Activated B cell treated with CpG ODN at 0.5 μM for 24 hours (primary cell): ENCODE measurements at regions of chr1 and their contacts with region 1.

Region 1: GRCh38 chr1:65419681-65420589 is 533 bp upstream of the LEPR start:
- DNase-seq: peak; percentile 94
- ATAC-seq: peak; percentile 92
- H3K4me3 Mint-ChIP-seq: no peak overlapping the region
- H3K27ac Mint-ChIP-seq: peak overlapping the region; percentile 91
- H3K4me1 Mint-ChIP-seq: peaks cover 11% of the 10 kb centered on the region
- H3K27me3 Mint-ChIP-seq: peaks cover 9% of the 10 kb centered on the region
- CTCF ChIP-seq: no peak

Region 2: GRCh38 chr1:63522891-63523728 is 1896.8 kb before region 1 on chr1 and contains the starts of genes EFCAB7 and ITGB3BP:
- CTCF ChIA-PET with region 1: no interaction called
- POLR2A ChIA-PET with region 1: no interaction called
- intact Hi-C with region 1: loop called (anchors 2 kb)
- DNase-seq: peak; percentile 78
- ATAC-seq: peak; percentile 87
- H3K4me3 Mint-ChIP-seq: peak within 1 kb of the TSS; percentile 97
- H3K27ac Mint-ChIP-seq: peak within 1 kb of the TSS; percentile 98
- H3K4me1 Mint-ChIP-seq: peaks cover 22% of the 10 kb centered on the region
- H3K27me3 Mint-ChIP-seq: no peaks in the 10 kb centered on the region
- CTCF ChIP-seq: no peak
- total RNA-seq, gene EFCAB7: 7.5 and 8.6 TPM in 2 replicates
- total RNA-seq, gene ITGB3BP: 24.9 and 27.0 TPM in 2 replicates

Region 3: GRCh38 chr1:64744492-64745180 is 675.3 kb before region 1 on chr1 and contains the start of gene RAVER2:
- CTCF ChIA-PET with region 1: no interaction called
- POLR2A ChIA-PET with region 1: no interaction called
- intact Hi-C with region 1: loop called (anchors 10 kb)
- DNase-seq: peak; percentile 50
- ATAC-seq: peak; percentile 79
- H3K4me3 Mint-ChIP-seq: peak within 1 kb of the TSS; percentile 85
- H3K27ac Mint-ChIP-seq: peak within 1 kb of the TSS; percentile 18
- H3K4me1 Mint-ChIP-seq: peaks cover 20% of the 10 kb centered on the region
- H3K27me3 Mint-ChIP-seq: peaks cover 8% of the 10 kb centered on the region
- CTCF ChIP-seq: no peak
- total RNA-seq, gene RAVER2: 1.0 and 1.2 TPM in 2 replicates

Region 4: DNA sequence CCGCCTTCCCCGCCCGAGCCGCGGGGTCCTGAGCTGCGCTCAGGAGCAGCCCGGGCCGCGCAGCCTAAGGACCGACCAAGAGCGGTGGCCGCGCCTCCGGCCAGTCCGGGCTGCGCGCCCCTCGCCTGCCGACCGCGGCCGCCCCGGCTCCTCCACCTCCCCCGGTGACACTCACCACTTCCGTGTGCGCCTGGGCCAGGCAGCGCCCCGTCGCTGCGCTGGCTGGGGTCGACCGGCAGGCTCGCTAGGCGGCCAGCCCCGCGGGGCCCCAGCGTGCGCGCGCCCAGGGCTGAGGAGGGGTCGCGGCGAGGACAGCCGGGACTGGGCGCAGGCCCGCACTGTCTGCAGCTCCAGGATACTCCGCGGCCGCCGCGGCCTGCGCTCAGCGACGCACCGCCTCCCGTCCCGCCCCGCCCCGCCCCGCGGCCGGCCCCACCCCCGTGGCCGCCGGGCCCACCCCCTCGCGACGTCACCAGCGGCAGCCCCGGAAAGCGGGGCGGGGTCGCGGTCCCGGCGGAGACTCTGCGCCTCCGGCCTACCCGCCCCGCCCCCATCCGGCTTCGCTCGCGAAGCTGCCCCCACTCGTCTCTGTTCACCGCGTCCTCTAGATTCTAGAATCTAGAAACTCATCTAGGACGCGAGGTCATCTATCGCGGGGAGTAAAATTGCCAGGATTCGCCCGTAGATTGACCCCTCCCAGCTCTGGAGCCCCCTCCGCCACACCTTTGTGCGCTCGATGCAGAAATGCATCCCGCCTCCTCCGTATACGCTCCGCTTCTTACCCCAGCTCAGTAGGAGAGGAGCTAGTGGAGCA is 453.6 kb before region 1 on chr1 and contains the start of gene JAK1:
- CTCF ChIA-PET with region 1: no interaction called
- POLR2A ChIA-PET with region 1: no interaction called
- intact Hi-C with region 1: loop called (anchors 1 kb)
- DNase-seq: peak; percentile 84
- ATAC-seq: peak; percentile 85
- H3K4me3 Mint-ChIP-seq: peak within 1 kb of the TSS; percentile 93
- H3K27ac Mint-ChIP-seq: peak within 1 kb of the TSS; percentile 92
- H3K4me1 Mint-ChIP-seq: peaks cover 49% of the 10 kb centered on the region
- H3K27me3 Mint-ChIP-seq: no peaks in the 10 kb centered on the region
- CTCF ChIP-seq: no peak
- total RNA-seq, gene JAK1: 195 and 215 TPM in 2 replicates

Region 5: GRCh38 chr1:65067491-65068201 is 352.3 kb before region 1 on chr1:
- CTCF ChIA-PET with region 1: no interaction called
- POLR2A ChIA-PET with region 1: interaction called, 5 read pairs
- intact Hi-C with region 1: loop called (anchors 1 kb)
- DNase-seq: peak; percentile 50
- ATAC-seq: peak; percentile 15
- H3K4me3 Mint-ChIP-seq: peak overlapping the region; percentile 97
- H3K27ac Mint-ChIP-seq: peak overlapping the region; percentile 99
- H3K4me1 Mint-ChIP-seq: peaks cover 48% of the 10 kb centered on the region
- H3K27me3 Mint-ChIP-seq: no peaks in the 10 kb centered on the region
- CTCF ChIP-seq: no peak

Region 6: GRCh38 chr1:65958561-65959350 is 538.8 kb after region 1 on chr1:
- CTCF ChIA-PET with region 1: no interaction called
- POLR2A ChIA-PET with region 1: no interaction called
- intact Hi-C with region 1: loop called (anchors 10 kb)
- DNase-seq: no peak
- ATAC-seq: peak; percentile 40
- H3K4me3 Mint-ChIP-seq: no peak overlapping the region
- H3K27ac Mint-ChIP-seq: no peak overlapping the region
- H3K4me1 Mint-ChIP-seq: peaks cover 4% of the 10 kb centered on the region
- H3K27me3 Mint-ChIP-seq: no peaks in the 10 kb centered on the region
- CTCF ChIP-seq: peak; percentile 44

Region 7: GRCh38 chr1:67053785-67054772 is 1634.1 kb after region 1 on chr1 and contains the start of gene SLC35D1:
- CTCF ChIA-PET with region 1: no interaction called
- POLR2A ChIA-PET with region 1: no interaction called
- intact Hi-C with region 1: loop called (anchors 5 kb)
- DNase-seq: peak; percentile 82
- ATAC-seq: peak; percentile 85
- H3K4me3 Mint-ChIP-seq: peak within 1 kb of the TSS; percentile 92
- H3K27ac Mint-ChIP-seq: peak within 1 kb of the TSS; percentile 92
- H3K4me1 Mint-ChIP-seq: peaks cover 21% of the 10 kb centered on the region
- H3K27me3 Mint-ChIP-seq: no peaks in the 10 kb centered on the region
- CTCF ChIP-seq: no peak
- total RNA-seq, gene SLC35D1: 10.1 and 11.1 TPM in 2 replicates